ENCODE measurements at regions of chr7 and their contacts with region 1.

Region 1: DNA sequence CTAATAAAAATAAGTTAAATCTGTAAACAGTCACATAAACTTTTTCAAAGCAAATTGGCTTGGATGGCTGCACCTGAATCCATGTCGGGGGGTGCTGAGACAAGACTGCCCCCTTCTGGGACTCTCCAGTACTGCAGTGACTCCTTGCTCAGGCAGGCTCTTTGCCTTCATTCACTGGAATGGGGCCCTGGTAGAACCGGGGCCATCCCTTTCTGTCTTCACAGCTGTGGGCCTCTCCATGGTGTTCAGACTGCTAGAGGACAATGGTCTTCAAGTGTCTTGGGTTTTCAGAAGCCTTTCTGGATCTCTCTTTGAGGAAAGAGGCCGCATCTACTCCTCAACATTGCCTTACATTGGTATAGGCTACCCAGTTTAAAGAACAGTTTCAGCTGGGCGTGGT is 16.1 kb upstream of the IMPDH1 start:
- DNase-seq: peak; percentile 89
- H3K4me3 Mint-ChIP-seq: no peak overlapping the region
- H3K27ac Mint-ChIP-seq: no peak overlapping the region
- H3K4me1 Mint-ChIP-seq: no peaks in the 10 kb centered on the region
- H3K27me3 Mint-ChIP-seq: peaks cover 9% of the 10 kb centered on the region

Region 2: DNA sequence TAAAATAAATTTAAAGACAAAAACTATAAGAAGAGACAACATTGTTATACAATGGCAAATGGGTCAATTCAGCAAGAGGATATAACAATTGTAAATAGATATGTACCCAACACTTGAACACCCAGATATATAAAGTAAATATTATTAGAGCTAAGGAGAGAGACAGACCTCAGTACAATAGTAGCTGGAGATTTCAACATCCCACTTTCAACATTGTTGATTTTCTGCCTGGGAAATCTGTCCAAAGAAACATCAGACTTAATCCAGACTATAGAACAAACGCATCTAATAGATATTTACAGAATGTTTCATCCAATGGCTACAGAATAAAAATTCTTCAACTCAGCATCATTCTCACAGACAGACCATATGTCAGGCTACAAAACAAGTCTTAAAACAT is 1429.2 kb before region 1 on chr7:
- CTCF ChIA-PET with region 1: no interaction called
- POLR2A ChIA-PET with region 1: no interaction called
- intact Hi-C with region 1: no loop called
- DNase-seq: no peak
- H3K4me3 Mint-ChIP-seq: no peak overlapping the region
- H3K27ac Mint-ChIP-seq: no peak overlapping the region
- H3K4me1 Mint-ChIP-seq: no peaks in the 10 kb centered on the region
- H3K27me3 Mint-ChIP-seq: no peaks in the 10 kb centered on the region

Region 3: DNA sequence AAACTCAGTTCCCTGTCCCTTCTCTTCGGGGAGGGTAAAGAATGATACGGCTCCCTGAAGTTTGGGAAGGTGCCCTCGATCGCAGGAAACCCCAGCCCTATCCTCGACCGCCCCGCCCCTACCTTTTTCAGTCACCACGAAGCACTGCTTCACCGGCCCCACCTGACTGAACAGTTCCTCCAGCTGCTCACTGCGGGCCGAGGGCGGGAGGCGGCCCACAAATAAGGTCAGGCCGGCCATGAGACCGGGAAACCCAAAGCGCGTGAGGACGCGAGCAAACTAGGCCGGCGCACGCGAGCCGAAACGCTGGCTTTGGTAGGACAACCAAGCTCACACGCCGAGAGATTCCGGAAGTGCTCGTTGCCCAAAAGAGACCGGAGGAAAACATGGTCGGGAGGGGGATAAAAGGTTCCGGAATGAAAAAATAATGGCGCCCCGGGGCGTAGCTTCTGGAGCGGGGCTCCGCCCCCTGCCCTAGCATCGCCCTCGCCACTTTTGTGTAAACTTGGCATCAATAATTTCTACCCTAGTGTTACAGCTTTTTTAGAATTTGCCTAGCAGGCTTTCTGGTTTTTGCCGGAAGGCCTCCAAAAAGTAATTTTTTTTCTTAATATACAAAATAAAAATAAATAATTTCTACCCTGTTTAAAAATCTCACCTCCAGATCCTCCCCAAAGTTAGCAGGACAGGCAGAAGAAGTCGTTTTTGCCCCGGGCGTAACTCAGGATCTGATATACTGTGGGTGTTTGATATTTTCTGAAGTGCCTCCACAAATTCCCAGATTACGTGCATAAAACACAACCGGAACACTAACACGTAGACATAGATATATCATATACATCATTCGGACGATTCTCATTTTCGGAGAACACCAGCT is 82.1 kb before region 1 on chr7 and contains the start of gene RBM28:
- CTCF ChIA-PET with region 1: interaction called, 121 read pairs
- POLR2A ChIA-PET with region 1: no interaction called
- intact Hi-C with region 1: loop called (anchors 1 kb)
- DNase-seq: peak; percentile 92
- H3K4me3 Mint-ChIP-seq: peak within 1 kb of the TSS; percentile 92
- H3K27ac Mint-ChIP-seq: peak within 1 kb of the TSS; percentile 88
- H3K4me1 Mint-ChIP-seq: peaks cover 24% of the 10 kb centered on the region
- H3K27me3 Mint-ChIP-seq: peaks cover 2% of the 10 kb centered on the region
- total RNA-seq, gene RBM28: 46.2 to 56.0 TPM

Region 4: GRCh38 chr7:128387216-128388144 is 38.4 kb before region 1 on chr7:
- CTCF ChIA-PET with region 1: interaction called, 10 read pairs
- POLR2A ChIA-PET with region 1: no interaction called
- intact Hi-C with region 1: no loop called
- DNase-seq: peak; percentile 79
- H3K4me3 Mint-ChIP-seq: no peak overlapping the region
- H3K27ac Mint-ChIP-seq: no peak overlapping the region
- H3K4me1 Mint-ChIP-seq: no peaks in the 10 kb centered on the region
- H3K27me3 Mint-ChIP-seq: no peaks in the 10 kb centered on the region

Region 5: DNA sequence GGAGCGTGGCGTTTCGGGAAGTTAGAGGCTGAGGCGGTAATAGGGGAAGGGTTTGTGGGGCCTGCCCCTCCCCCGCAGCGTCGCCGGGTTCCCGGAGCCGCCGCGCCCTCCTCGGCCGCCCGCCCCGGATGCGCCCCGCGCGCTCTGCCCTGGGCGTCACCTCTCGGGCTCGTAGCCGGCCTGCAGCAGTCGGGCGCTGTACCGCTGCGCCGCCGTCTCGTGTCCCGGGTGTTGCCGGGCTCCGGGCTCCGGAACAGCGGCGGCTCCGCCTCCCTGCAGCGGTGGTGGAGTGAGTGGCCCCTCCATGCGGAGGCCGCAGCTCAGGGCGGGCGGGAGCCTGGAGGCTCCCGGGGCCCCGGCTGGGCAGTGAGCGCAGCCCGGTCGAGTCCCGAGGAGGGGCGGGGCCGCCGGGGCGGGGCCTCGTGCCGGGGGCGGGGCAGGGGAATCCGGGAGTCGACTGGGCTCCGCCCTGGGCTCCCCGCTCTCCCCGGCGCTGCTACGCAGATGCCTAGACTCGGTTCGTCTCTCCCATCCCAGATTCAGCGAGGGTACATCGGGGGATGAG is 16.2 kb before region 1 on chr7 and contains the start of gene IMPDH1:
- CTCF ChIA-PET with region 1: interaction called, 144 read pairs
- POLR2A ChIA-PET with region 1: interaction called, 5 read pairs
- intact Hi-C with region 1: loop called (anchors 1 kb)
- DNase-seq: peak; percentile 90
- H3K4me3 Mint-ChIP-seq: peak within 1 kb of the TSS; percentile 84
- H3K27ac Mint-ChIP-seq: peak within 1 kb of the TSS; percentile 60
- H3K4me1 Mint-ChIP-seq: peaks cover 28% of the 10 kb centered on the region
- H3K27me3 Mint-ChIP-seq: peaks cover 3% of the 10 kb centered on the region
- total RNA-seq, gene IMPDH1: 52.9 to 57.7 TPM

Region 6: DNA sequence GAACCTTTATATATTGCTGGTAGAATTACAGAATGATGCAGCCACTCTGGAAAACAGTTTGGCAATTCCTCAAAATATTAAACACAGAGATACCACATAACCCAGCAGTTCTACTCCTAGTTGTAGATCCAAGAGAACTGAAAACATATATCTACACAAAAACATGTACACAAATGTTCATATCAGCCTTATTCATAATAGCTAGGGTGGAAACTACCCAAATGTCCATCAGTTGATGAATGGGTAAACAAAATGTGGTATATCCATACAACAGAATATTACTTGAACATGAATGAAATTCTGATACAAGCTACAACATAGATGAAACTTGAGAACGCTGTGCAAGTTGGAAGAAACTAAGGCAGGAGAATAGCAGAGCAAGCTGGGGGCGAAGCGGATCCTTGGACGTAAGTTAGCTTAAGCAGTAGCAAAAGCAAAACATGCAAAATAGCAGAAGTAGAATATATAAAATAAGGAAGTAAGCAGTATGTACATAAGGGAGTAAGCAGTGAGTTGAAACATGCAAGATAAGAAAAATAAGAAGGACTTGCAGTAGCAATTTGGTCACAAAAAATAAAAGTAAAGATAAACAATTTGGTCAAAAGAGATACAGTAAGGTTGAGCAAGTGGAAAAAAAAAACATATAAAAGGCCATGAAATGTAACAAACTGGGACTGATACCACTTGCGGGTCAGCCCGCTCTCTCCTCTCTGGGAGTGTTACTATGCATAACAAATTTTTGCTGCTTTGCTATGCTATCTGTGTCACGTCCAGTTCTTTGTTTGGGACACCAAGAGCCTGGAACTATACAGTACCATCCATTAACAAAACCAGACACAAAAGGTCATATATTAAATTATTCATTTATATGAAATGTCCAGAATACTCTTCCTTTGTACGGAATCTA is 11.8 kb after region 1 on chr7:
- CTCF ChIA-PET with region 1: interaction called, 30 read pairs
- POLR2A ChIA-PET with region 1: no interaction called
- intact Hi-C with region 1: no loop called
- DNase-seq: no peak
- H3K4me3 Mint-ChIP-seq: no peak overlapping the region
- H3K27ac Mint-ChIP-seq: no peak overlapping the region
- H3K4me1 Mint-ChIP-seq: no peaks in the 10 kb centered on the region
- H3K27me3 Mint-ChIP-seq: peaks cover 3% of the 10 kb centered on the region

Region 7: DNA sequence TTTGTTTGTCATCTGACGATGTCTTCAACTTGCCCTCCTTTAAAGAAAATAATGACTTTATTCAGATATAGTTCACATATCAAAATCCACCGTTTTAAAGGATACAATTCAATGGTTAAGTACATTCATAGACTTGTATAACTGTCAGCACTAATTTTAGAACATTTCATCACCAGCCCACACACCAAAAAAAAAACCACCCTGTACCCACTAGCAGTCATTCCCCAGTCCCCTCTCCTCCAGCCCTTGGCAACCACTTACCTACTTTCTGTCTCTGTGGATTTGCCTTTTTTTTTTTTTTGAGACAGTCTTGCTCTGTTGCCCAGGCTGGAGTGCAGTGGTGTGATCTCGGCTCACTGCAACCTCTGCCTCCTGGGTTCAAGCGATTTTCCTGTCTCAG is 24.6 kb after region 1 on chr7:
- CTCF ChIA-PET with region 1: interaction called, 56 read pairs
- POLR2A ChIA-PET with region 1: no interaction called
- intact Hi-C with region 1: no loop called
- DNase-seq: no peak
- H3K4me3 Mint-ChIP-seq: no peak overlapping the region
- H3K27ac Mint-ChIP-seq: peak overlapping the region; percentile 42
- H3K4me1 Mint-ChIP-seq: peaks cover 46% of the 10 kb centered on the region
- H3K27me3 Mint-ChIP-seq: peaks cover 5% of the 10 kb centered on the region

Region 8: GRCh38 chr7:128862571-128863432 is 437.0 kb after region 1 on chr7 and contains the start of gene ATP6V1F:
- CTCF ChIA-PET with region 1: interaction called, 5 read pairs
- POLR2A ChIA-PET with region 1: no interaction called
- intact Hi-C with region 1: loop called (anchors 10 kb)
- DNase-seq: peak; percentile 100
- H3K4me3 Mint-ChIP-seq: peak within 1 kb of the TSS; percentile 98
- H3K27ac Mint-ChIP-seq: peak within 1 kb of the TSS; percentile 84
- H3K4me1 Mint-ChIP-seq: peaks cover 14% of the 10 kb centered on the region
- H3K27me3 Mint-ChIP-seq: peaks cover 1% of the 10 kb centered on the region
- total RNA-seq, gene ATP6V1F: 113 to 117 TPM